CD4-positive, alpha-beta memory T cell (primary cell): ENCODE measurements at regions of chr4 and their contacts with region 1.

Region 1: DNA sequence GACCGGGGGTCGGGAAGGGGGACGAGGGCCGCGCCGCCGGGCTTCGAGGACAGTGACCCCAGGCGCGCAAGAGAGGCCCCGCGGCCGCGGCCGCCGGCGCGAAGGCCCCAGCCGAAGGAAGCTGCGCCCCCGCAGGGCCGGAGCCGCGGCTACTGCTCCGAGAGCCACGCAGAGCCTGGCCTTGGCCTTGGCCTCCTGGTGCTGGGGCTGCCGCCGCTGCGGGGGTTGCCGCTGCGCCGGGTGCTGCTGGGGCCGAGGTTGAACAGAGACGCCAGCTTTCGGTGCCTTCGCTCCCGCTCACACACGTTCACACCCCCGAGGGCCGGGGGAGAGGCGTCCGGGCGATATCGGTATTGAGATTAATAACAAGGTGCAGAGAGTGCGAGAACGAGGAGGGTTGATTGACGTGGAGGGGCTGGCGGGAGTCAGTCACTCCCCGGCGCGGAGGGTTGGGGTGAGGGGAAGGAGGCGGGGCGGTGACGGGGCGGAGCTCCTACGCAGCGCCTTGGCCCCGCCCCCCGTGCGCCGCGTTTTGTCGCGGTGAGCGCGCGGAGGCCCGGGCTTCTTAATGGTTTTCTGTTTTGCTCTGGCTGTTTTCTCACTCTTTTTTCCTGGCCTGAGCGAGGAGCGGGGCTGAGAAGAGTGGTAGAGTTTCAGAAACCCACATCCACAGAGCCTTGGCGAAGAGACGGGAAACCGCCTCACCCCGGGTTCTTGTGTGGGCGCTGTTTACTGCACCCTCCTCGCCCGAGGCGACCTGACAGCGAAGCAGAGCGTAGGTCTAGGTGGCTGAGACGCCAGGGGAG is 878 bp upstream of the CNOT6L start:
- DNase-seq: peak; percentile 96 to 97 (median 97)
- H3K4me3 ChIP-seq: peak overlapping the region; percentile 80 to 86
- H3K4me3 Mint-ChIP-seq: peak overlapping the region; percentile 90 to 98 (median 94)
- H3K27ac ChIP-seq: peak overlapping the region; percentile 98
- H3K27ac Mint-ChIP-seq: peak overlapping the region; percentile 94 to 100 (median 99)
- H3K4me1 ChIP-seq: peaks cover 62% of the 10 kb centered on the region
- H3K4me1 Mint-ChIP-seq: peaks cover 34 to 66% (median 46%) of the 10 kb centered on the region in 4 donors
- H3K27me3 ChIP-seq: no peaks in the 10 kb centered on the region
- H3K27me3 Mint-ChIP-seq: peaks cover 0 to 4% of the 10 kb centered on the region in 2 donors

Region 2: DNA sequence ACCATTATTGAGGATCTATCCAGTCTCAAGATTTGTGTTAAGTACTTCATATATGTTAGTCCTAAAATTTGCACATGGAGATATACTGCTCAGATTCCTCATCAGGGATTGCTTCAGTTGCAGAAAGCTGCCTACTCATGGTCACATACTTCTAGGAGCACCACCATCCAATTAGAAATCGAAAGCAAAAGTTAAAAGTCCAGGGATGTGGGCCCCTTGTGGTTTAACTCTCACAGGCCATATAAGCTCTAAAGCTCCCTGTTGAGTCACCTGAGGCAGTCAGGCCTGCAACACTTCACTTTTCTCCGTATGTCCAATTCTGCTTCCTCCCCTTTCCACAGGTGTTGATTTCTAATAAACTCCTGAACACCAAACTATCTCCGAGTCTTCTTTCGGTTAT is 85.1 kb before region 1 on chr4:
- CTCF ChIA-PET with region 1: interaction called, 4 read pairs
- POLR2A ChIA-PET with region 1: interaction called, 11 read pairs
- intact Hi-C with region 1: loop called (anchors 5 kb)
- DNase-seq: peak; percentile 34 to 66 (median 43)
- H3K4me3 ChIP-seq: no peak overlapping the region
- H3K4me3 Mint-ChIP-seq: peak overlapping the region in 7 of 8 donors; percentile 56 to 87 (median 77)
- H3K27ac ChIP-seq: peak overlapping the region; percentile 23
- H3K27ac Mint-ChIP-seq: peak overlapping the region; percentile 51 to 90 (median 80)
- H3K4me1 ChIP-seq: peaks cover 37% of the 10 kb centered on the region
- H3K4me1 Mint-ChIP-seq: peaks cover 44 to 69% (median 46%) of the 10 kb centered on the region in 4 donors
- H3K27me3 ChIP-seq: no peaks in the 10 kb centered on the region
- H3K27me3 Mint-ChIP-seq: no peaks in the 10 kb centered on the region

Region 3: GRCh38 chr4:77795326-77795725 is 24.7 kb before region 1 on chr4:
- CTCF ChIA-PET with region 1: interaction called, 18 read pairs
- POLR2A ChIA-PET with region 1: interaction called, 83 read pairs
- intact Hi-C with region 1: no loop called
- DNase-seq: no peak
- H3K4me3 ChIP-seq: no peak overlapping the region
- H3K4me3 Mint-ChIP-seq: peak overlapping the region in 5 of 8 donors; percentile 18 to 80 (median 51)
- H3K27ac ChIP-seq: no peak overlapping the region
- H3K27ac Mint-ChIP-seq: peak overlapping the region in 5 of 7 donors; percentile 15 to 91 (median 81)
- H3K4me1 ChIP-seq: peaks cover 88% of the 10 kb centered on the region
- H3K4me1 Mint-ChIP-seq: peaks cover 48 to 88% (median 67%) of the 10 kb centered on the region in 4 donors
- H3K27me3 ChIP-seq: no peaks in the 10 kb centered on the region
- H3K27me3 Mint-ChIP-seq: no peaks in the 10 kb centered on the region

Region 4: DNA sequence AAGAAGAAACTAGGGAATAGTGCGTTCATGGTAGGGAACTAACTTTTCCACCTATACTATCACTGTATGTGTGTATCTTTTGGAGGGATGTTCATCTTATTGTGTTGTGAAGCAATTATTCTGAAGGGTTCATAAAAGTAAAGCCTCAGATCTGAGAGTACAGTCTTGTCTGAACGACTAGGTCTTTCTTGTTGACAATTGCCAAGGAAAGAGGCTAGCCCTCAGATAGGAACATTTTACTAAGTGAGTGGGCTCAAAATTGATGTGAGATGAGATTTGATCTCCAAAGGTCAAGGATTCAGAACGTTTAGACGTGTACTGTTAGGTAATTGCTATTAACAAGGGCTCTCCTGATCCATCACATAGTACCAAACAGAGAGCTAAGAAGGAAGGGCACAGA is 14.4 kb after region 1 on chr4:
- CTCF ChIA-PET with region 1: no interaction called
- POLR2A ChIA-PET with region 1: interaction called, 11 read pairs
- intact Hi-C with region 1: no loop called
- DNase-seq: no peak
- H3K4me3 ChIP-seq: no peak overlapping the region
- H3K4me3 Mint-ChIP-seq: no peak overlapping the region
- H3K27ac ChIP-seq: no peak overlapping the region
- H3K27ac Mint-ChIP-seq: no peak overlapping the region
- H3K4me1 ChIP-seq: no peaks in the 10 kb centered on the region
- H3K4me1 Mint-ChIP-seq: peaks cover 0 to 5% (median 2%) of the 10 kb centered on the region in 4 donors
- H3K27me3 ChIP-seq: no peaks in the 10 kb centered on the region
- H3K27me3 Mint-ChIP-seq: no peaks in the 10 kb centered on the region

Region 5: DNA sequence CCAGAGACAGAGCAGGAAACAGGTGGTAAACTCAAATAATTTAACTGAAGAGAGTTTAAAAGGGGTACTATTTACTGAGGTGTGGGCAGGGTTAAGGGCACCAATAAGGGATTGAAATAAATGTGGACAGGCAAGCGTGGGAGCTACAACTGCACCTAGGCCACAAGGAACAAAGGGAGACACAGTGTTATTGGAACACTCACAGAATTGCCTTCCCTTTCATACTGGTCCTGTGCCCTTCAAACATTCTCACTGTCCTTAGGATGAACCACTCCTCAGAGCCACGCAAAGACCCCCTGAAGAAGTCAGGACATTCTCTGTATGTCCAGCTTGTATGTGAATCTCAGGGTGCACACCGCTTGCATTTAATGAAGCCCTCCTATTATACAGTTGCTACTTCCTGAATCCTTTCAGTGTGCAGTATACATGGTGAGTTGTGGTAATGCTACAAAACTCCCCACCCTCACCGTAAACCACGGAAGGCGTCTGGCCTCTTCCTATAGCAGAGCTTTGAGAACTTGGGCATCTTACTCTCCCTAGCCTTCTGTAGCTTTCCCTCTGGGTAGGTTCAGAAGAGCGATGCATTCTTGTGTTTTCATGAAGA is 32.9 kb after region 1 on chr4:
- CTCF ChIA-PET with region 1: interaction called, 21 read pairs
- POLR2A ChIA-PET with region 1: interaction called, 908 read pairs
- intact Hi-C with region 1: loop called (anchors 1 kb)
- DNase-seq: peak; percentile 76 to 90 (median 80)
- H3K4me3 ChIP-seq: peak overlapping the region; percentile 37
- H3K4me3 Mint-ChIP-seq: peak overlapping the region; percentile 73 to 91 (median 79)
- H3K27ac ChIP-seq: peak overlapping the region; percentile 78
- H3K27ac Mint-ChIP-seq: peak overlapping the region; percentile 90 to 100 (median 99)
- H3K4me1 ChIP-seq: peaks cover 62% of the 10 kb centered on the region
- H3K4me1 Mint-ChIP-seq: peaks cover 43 to 59% (median 51%) of the 10 kb centered on the region in 4 donors
- H3K27me3 ChIP-seq: no peaks in the 10 kb centered on the region
- H3K27me3 Mint-ChIP-seq: no peaks in the 10 kb centered on the region